ENCODE measurements at regions of chr6 and their contacts with region 1.

Region 1: DNA sequence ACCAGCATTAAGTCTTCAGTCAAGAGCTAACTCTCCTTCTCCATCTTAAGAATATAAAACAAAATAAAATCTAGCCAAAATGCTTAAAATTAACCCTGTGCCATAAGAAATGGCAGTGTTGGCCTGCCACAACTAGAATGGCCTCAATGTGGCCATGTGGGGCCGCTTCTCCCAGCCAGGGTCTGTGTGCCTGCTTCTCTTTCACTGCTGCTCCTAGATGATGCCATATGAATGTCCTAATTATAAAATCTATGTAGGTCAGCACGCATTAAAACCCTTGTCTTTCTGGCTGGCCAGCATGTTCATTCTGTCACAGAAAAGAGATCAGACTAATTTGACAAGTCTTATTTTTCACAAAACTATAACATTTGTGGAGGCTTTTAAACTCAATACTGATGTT is 102.6 kb downstream of the C6orf118 start:
- DNase-seq: no peak
- H3K4me3 ChIP-seq: no peak overlapping the region
- H3K27ac ChIP-seq: no peak overlapping the region
- H3K4me1 ChIP-seq: no peaks in the 10 kb centered on the region
- H3K27me3 ChIP-seq: no peaks in the 10 kb centered on the region
- CTCF ChIP-seq: no peak
- EP300 ChIP-seq: no peak
- POLR2A ChIP-seq: no peak

Region 2: GRCh38 chr6:165183496-165184140 is 23.2 kb before region 1 on chr6:
- intact Hi-C with region 1: loop called in 1 of 4 experiments (anchors 1 kb)
- DNase-seq: no peak
- H3K4me3 ChIP-seq: no peak overlapping the region
- H3K27ac ChIP-seq: no peak overlapping the region
- H3K4me1 ChIP-seq: no peaks in the 10 kb centered on the region
- H3K27me3 ChIP-seq: no peaks in the 10 kb centered on the region
- CTCF ChIP-seq: no peak
- EP300 ChIP-seq: no peak
- POLR2A ChIP-seq: no peak